ENCODE measurements at regions of chr7 and their contacts with region 1.

Region 1: DNA sequence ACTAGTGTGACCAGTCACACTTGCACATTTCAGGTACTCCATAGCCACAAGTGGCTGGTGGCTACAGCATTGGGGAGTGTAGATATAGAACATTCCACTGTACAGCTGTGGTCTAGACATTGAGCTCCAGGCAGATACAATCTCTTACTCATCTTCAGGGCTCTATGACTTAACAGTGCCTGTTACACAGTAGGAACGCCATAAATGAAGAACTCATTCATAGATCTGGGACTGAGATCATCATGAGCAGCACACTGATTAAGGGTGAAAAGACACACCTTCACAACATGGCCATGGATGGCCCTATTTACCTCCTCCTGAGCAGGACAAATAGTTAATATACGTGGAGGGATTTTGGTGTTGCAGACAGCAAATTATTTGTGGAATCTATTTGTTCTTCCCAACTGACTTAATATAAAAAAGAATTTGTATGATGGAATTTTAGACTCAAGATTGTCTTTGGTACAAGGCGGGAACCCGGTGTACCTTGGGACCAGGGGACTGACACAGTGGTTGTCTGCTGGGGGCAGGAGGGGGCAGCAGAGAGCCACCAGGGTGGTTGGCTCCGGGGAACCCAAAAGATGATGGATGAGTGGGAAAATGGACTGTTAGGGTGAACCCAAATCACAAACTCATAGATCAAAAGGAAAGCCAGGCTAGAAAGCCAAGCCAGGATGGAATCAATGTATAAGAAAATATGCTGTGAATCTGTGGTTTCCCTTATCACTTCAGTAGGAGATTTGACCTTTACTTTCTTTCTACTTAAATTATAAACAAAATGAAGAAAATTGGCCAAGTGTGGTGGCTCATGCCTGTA is 24.3 kb upstream of the CPA2 start:
- DNase-seq: peak; percentile 53
- H3K4me3 Mint-ChIP-seq: no peak overlapping the region
- H3K27ac Mint-ChIP-seq: no peak overlapping the region
- H3K4me1 Mint-ChIP-seq: peaks cover 15% of the 10 kb centered on the region
- H3K27me3 Mint-ChIP-seq: peaks cover 29% of the 10 kb centered on the region

Region 2: GRCh38 chr7:130334274-130334673 is 91.9 kb after region 1 on chr7:
- CTCF ChIA-PET with region 1: no interaction called
- POLR2A ChIA-PET with region 1: no interaction called
- DNase-seq: no peak
- H3K4me3 Mint-ChIP-seq: no peak overlapping the region
- H3K27ac Mint-ChIP-seq: no peak overlapping the region
- H3K4me1 Mint-ChIP-seq: no peaks in the 10 kb centered on the region
- H3K27me3 Mint-ChIP-seq: peaks cover 9% of the 10 kb centered on the region

Region 3: DNA sequence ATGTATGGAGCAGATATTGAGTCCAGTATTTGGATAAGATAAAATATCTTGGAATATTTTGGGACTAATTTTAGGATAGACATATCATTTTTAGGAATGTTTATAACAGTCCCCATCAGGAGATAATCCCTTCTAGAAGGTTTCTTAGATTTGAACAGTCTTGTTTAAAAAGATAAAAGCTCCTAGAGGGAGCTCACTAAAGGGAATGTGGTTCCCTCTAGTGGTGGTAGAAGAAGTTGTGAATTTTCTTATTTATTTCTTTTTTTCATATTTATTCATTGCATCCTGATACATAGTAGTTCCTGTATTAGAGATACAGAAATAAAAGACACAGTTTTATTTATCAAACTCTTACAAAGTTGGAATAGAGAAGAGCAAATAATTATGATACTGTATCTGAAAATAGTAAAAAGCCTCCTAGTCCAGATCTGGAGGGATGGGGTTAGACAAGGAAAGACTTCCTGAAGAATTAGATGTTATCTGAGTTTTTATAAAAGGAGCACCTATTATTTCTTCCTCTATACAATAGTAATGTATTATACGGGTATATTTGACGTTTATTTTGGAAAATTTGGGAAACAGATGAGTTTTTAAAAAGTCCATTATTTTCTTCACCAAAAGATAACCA is 516.1 kb after region 1 on chr7:
- CTCF ChIA-PET with region 1: interaction called, 12 read pairs
- POLR2A ChIA-PET with region 1: no interaction called
- DNase-seq: no peak
- H3K4me3 Mint-ChIP-seq: no peak overlapping the region
- H3K27ac Mint-ChIP-seq: no peak overlapping the region
- H3K4me1 Mint-ChIP-seq: no peaks in the 10 kb centered on the region
- H3K27me3 Mint-ChIP-seq: peaks cover 7% of the 10 kb centered on the region

Measured in activated CD4-positive, alpha-beta memory T cell treated with anti-CD3 and anti-CD28 coated beads, Interleukin-2, amount 10 ng/mL, durations not matched to agents 7 days and 5 days (primary cell).